ENCODE measurements at regions of chr11 and their contacts with region 1.

Region 1: GRCh38 chr11:111932611-111932950 is 4.6 kb upstream of the DIXDC1 start:
- DNase-seq: no peak
- H3K4me3 Mint-ChIP-seq: peak overlapping the region; percentile 53
- H3K27ac Mint-ChIP-seq: peak overlapping the region; percentile 87
- H3K4me1 Mint-ChIP-seq: peaks cover 32% of the 10 kb centered on the region
- H3K27me3 Mint-ChIP-seq: no peaks in the 10 kb centered on the region

Region 2: GRCh38 chr11:111951565-111951964 is 19.0 kb after region 1 on chr11:
- CTCF ChIA-PET with region 1: no interaction called
- POLR2A ChIA-PET with region 1: no interaction called
- intact Hi-C with region 1: no loop called
- DNase-seq: no peak
- H3K4me3 Mint-ChIP-seq: no peak overlapping the region
- H3K27ac Mint-ChIP-seq: no peak overlapping the region
- H3K4me1 Mint-ChIP-seq: peaks cover 10% of the 10 kb centered on the region
- H3K27me3 Mint-ChIP-seq: no peaks in the 10 kb centered on the region

Region 3: DNA sequence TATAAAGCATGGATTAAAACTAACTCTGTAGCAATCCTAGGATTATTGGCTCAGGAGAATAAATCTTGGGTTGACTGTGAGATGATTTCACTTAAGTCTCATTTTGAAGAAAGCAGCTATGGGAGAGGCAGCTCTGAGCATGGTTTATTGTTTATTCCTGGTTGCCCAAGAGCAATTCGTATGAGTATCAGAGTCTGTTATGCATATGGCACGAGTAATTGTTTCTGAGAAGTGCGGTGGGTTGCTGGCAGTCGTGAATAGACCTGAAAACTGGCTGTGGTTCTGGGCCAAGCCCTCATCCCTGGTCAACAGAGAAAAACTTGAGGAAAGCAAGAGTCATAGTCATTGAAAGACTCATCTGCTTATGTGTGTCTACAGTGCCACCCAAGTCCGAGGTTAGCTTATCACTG is 31.4 kb after region 1 on chr11:
- CTCF ChIA-PET with region 1: interaction called, 4 read pairs
- POLR2A ChIA-PET with region 1: interaction called, 6 read pairs
- intact Hi-C with region 1: loop called (anchors 1 kb)
- DNase-seq: peak; percentile 56
- H3K4me3 Mint-ChIP-seq: no peak overlapping the region
- H3K27ac Mint-ChIP-seq: no peak overlapping the region
- H3K4me1 Mint-ChIP-seq: peaks cover 8% of the 10 kb centered on the region
- H3K27me3 Mint-ChIP-seq: no peaks in the 10 kb centered on the region

Region 4: DNA sequence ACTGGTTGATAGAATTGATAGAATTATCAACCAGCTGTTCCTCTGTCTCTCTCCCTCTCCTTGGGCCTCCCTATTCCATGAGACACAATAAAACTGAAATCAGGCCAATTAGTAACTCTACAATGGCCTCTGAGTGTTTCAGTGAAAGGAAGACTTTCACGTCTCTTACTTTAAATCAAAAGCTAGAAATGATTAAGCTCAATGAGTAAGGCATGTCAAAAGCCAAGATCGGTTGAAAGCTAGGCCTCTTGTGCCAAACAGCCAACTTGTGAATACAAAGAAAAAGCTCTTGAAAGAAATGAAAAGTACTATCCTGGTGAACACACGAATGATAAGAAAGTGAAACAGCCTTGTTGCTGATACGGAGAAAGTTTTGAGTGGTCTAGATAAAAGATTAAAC is 124.6 kb after region 1 on chr11:
- CTCF ChIA-PET with region 1: interaction called, 5 read pairs
- POLR2A ChIA-PET with region 1: no interaction called
- intact Hi-C with region 1: loop called (anchors 1 kb)
- DNase-seq: peak; percentile 29
- H3K4me3 Mint-ChIP-seq: peak overlapping the region; percentile 33
- H3K27ac Mint-ChIP-seq: peak overlapping the region; percentile 69
- H3K4me1 Mint-ChIP-seq: peaks cover 23% of the 10 kb centered on the region
- H3K27me3 Mint-ChIP-seq: no peaks in the 10 kb centered on the region

Measured in activated CD4-positive, alpha-beta memory T cell treated with anti-CD3 and anti-CD28 coated beads for 36 hours (primary cell).